ENCODE measurements at regions of chr13 and their contacts with region 1.

Region 1: GRCh38 chr13:20773194-20774080 is at the start of gene EEF1AKMT1:
- DNase-seq: peak; percentile 81
- ATAC-seq: peak; percentile 94
- H3K4me3 ChIP-seq: peak within 1 kb of the TSS; percentile 70 to 86 (median 74)
- H3K27ac ChIP-seq: peak within 1 kb of the TSS; percentile 98
- H3K4me1 ChIP-seq: peaks cover 41% of the 10 kb centered on the region
- H3K27me3 ChIP-seq: no peaks in the 10 kb centered on the region
- CTCF ChIP-seq: peak; percentile 13; the same call in 1 of the 2 replicates
- EP300 ChIP-seq: no peak
- POLR2A ChIP-seq: peak; percentile 93 to 95
- RAD21 ChIP-seq: 0 out of 2 replicates have a peak, but pooled peaks have one; percentile 48
- total RNA-seq, gene EEF1AKMT1: 16.1 and 23.5 TPM in 2 replicates

Region 2: GRCh38 chr13:20902438-20903163 is 129.2 kb after region 1 on chr13 and contains the start of gene XPO4:
- CTCF ChIA-PET with region 1: no interaction called
- POLR2A ChIA-PET with region 1: no interaction called
- in situ Hi-C with region 1: no loop called
- intact Hi-C with region 1: loop called (anchors 1 kb)
- DNase-seq: peak; percentile 59
- ATAC-seq: peak; percentile 93
- H3K4me3 ChIP-seq: peak within 1 kb of the TSS; percentile 70 to 92 (median 83)
- H3K27ac ChIP-seq: peak within 1 kb of the TSS; percentile 91
- H3K4me1 ChIP-seq: peaks cover 53% of the 10 kb centered on the region
- H3K27me3 ChIP-seq: no peaks in the 10 kb centered on the region; a peak in 1 of 5 replicates
- CTCF ChIP-seq: no peak
- EP300 ChIP-seq: no peak
- POLR2A ChIP-seq: peak in 1 of 2 experiments; percentile 52; a peak in 3 of 4 replicates
- RAD21 ChIP-seq: no peak; the same call in 1 of the 2 replicates
- total RNA-seq, gene XPO4: 24.8 and 41.5 TPM in 2 replicates

Measured in HepG2 (cell line).